OCI-LY7 (cell line): ENCODE measurements at regions of chr3 and their contacts with region 1.

Region 1: DNA sequence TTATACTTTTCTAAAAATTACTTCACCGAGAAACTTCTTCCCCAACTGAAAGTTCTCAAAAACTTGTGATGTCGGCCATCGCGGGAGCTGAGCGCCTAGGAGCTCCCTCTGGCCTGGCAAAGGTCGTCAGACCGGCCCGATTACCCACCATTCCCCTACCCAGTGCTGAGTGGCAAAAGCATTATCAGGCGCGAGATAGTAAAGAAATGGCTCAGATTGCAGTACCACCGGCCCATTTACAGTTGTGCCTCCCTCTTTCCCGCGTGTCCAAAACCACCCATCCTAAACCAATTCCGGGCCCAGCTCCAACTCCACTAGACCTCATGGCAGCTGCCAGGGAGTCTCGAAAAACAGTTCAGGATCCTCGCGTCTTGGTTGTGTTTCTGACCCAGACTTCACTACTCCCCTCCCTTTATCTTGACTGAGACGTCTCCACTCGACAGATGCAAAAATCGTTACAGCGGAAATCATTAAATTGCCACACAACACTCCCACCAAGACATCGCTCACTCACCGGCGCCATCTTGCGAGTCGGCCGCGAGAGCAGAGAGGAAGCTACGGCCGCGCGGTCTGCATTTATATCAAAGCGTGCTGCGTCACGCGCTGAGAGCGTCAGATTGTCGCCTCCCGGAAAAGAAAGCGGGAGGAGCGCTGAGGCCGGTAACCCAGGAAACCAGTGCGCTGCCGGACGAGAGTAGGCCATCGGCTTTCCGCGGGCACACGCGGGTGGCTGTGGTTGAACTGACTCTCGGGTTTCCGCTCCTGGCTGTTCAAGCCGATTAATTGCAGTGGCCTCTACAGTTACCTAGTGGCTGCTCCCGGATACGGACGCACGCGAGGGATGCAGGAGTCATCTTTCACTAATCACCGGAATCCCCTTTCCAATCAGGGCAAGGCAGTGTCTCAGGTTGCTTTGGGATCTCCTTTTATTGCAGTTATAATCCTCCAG is at the start of gene RPL22L1:
- DNase-seq: peak; percentile 97
- H3K4me3 ChIP-seq: peak within 1 kb of the TSS; percentile 97
- H3K27ac ChIP-seq: peak within 1 kb of the TSS; percentile 90
- H3K4me1 ChIP-seq: peaks cover 27% of the 10 kb centered on the region
- CTCF ChIP-seq: peak; percentile 31; the same call in 1 of the 2 replicates
- total RNA-seq, gene RPL22L1: 32.9 and 51.7 TPM in 2 replicates

Region 2: DNA sequence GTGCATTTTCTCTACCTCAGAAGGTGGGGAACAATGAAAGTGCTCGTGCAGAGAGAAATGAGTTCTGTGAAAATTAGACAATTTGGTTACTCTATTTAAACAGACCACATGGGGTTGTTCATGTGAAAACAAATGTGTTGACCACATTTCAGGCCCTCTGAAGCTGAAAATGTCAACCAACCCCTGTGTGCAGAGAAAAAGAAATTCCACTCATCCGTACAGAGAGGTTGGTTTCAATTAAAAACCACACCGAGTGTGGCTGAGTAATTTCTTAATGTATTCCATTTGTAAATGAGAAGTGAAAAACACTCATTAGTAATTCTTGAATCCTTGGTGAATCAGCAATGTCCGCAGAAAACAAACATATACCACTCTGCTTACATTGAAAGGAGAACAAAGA is 237.1 kb before region 1 on chr3:
- CTCF ChIA-PET with region 1: no interaction called
- POLR2A ChIA-PET with region 1: interaction called, 3 read pairs
- intact Hi-C with region 1: loop called (anchors 5 kb)
- DNase-seq: peak; percentile 68
- H3K4me3 ChIP-seq: no peak overlapping the region
- H3K27ac ChIP-seq: peak overlapping the region; percentile 53
- H3K4me1 ChIP-seq: peaks cover 20% of the 10 kb centered on the region
- CTCF ChIP-seq: no peak

Region 3: GRCh38 chr3:170848292-170848917 is 21.5 kb before region 1 on chr3:
- CTCF ChIA-PET with region 1: no interaction called
- POLR2A ChIA-PET with region 1: interaction called, 19 read pairs
- intact Hi-C with region 1: no loop called
- DNase-seq: no peak
- H3K4me3 ChIP-seq: no peak overlapping the region
- H3K27ac ChIP-seq: no peak overlapping the region
- H3K4me1 ChIP-seq: no peaks in the 10 kb centered on the region
- CTCF ChIP-seq: peak; percentile 78

Region 4: GRCh38 chr3:170889132-170889531 is 19.2 kb after region 1 on chr3:
- CTCF ChIA-PET with region 1: no interaction called
- POLR2A ChIA-PET with region 1: interaction called, 15 read pairs
- intact Hi-C with region 1: no loop called
- DNase-seq: no peak
- H3K4me3 ChIP-seq: no peak overlapping the region
- H3K27ac ChIP-seq: no peak overlapping the region
- H3K4me1 ChIP-seq: no peaks in the 10 kb centered on the region
- CTCF ChIP-seq: no peak

Region 5: GRCh38 chr3:170908235-170909116 is 38.6 kb after region 1 on chr3 and contains the start of gene EIF5A2:
- CTCF ChIA-PET with region 1: no interaction called
- POLR2A ChIA-PET with region 1: interaction called, 17 read pairs
- intact Hi-C with region 1: loop called (anchors 1 kb)
- DNase-seq: peak; percentile 98
- H3K4me3 ChIP-seq: peak within 1 kb of the TSS; percentile 76
- H3K27ac ChIP-seq: peak within 1 kb of the TSS; percentile 61
- H3K4me1 ChIP-seq: peaks cover 25% of the 10 kb centered on the region
- CTCF ChIP-seq: peak; percentile 30; the same call in 1 of the 2 replicates
- total RNA-seq, gene EIF5A2: 3.1 and 9.8 TPM in 2 replicates

Region 6: DNA sequence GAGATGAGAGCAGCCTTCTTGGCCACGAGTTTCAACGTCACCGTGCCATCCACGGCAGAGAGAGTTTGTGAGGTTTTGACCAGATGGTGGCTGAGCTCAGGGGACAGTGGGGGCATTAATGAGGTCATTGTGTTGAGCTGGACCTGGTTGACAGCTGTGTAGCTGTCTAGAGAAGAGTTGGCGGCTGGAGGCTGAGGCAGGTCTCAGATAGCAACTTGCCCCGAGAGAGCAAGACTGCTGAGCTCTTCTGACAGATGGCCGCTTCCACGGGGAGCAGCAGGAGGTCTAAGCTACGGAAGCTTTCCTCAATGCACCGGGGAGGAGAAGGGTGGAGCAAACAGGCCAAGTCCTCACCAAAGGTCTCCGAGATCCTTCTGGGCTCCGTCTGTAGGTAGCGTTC is 83.3 kb after region 1 on chr3:
- CTCF ChIA-PET with region 1: no interaction called
- POLR2A ChIA-PET with region 1: no interaction called
- intact Hi-C with region 1: no loop called
- DNase-seq: no peak
- H3K4me3 ChIP-seq: no peak overlapping the region
- H3K27ac ChIP-seq: no peak overlapping the region
- H3K4me1 ChIP-seq: no peaks in the 10 kb centered on the region
- CTCF ChIP-seq: no peak

Region 7: DNA sequence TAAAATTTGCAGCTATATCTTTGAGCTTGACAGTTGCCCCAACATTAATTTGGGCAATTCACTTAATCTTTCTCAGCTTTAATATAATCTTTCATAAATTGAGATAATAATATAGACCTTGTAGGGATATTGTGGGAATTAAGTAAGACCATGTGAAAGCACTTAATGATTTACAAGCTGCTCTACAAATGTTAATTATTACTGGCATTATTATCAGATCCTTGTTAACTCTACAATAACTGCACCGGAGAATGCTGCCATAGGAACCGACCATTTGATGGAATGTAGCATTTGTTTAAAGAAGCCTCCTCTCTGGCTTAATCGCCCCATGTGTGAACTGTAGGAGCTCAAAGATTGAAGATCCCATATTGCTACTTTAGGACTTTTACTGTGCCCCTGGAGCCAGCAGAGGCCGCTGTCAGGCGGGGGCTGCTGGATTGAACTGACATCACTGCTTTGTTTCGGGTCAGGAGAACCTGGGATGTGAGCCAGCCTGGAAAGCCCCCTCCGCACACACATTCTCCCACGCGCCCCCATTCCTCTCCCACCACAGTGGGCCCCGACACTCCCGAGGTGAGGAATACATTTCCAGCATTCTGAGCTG is 744.5 kb after region 1 on chr3:
- CTCF ChIA-PET with region 1: no interaction called
- POLR2A ChIA-PET with region 1: no interaction called
- intact Hi-C with region 1: no loop called
- DNase-seq: no peak
- H3K4me3 ChIP-seq: no peak overlapping the region
- H3K27ac ChIP-seq: no peak overlapping the region
- H3K4me1 ChIP-seq: no peaks in the 10 kb centered on the region
- CTCF ChIP-seq: peak; percentile 69